ENCODE measurements at regions of chr7 and their contacts with region 1.

Region 1: DNA sequence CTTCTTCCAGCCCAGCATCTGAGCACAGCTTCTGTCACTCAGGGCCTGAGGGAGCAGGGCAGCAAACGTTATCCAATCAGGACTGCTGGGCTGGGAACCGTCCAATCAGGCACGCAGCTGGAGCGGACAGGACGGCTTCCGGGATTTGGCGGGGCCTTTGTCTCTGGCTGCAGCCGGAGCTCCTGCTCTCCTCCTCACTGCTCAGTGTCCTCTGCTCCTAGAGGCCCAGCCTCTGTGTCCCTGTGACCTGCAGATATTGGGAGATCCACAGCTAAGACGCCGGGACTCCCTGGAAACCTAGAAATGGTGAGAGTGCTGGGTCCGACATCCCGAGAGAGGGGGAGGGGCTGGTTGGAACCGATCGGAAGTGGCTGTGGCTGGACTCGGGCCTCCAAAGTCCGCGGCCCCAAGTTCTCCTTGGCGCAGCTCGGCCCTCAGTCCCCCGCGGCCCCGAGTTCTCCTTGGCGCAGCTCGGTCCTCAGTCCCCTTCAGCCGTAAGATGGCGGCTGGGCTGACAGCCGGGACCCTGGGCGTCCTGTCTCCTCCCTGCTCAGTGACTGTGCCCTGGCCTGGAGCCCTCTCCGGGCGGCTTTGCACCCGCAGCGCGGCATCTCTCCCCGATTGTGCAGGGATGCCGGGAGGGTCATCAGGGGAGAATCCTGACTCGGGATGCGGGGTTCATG is at the start of gene ZNF107:
- DNase-seq: peak; percentile 93
- H3K4me3 Mint-ChIP-seq: peak within 1 kb of the TSS; percentile 95
- H3K27ac Mint-ChIP-seq: peak within 1 kb of the TSS; percentile 96
- H3K4me1 Mint-ChIP-seq: peaks cover 47% of the 10 kb centered on the region
- H3K27me3 Mint-ChIP-seq: no peaks in the 10 kb centered on the region
- total RNA-seq, gene ZNF107: 7.7 to 8.0 TPM

Region 2: GRCh38 chr7:63900394-63901203 is 765.5 kb before region 1 on chr7:
- CTCF ChIA-PET with region 1: no interaction called
- intact Hi-C with region 1: loop called (anchors 2 kb)
- DNase-seq: peak; percentile 95
- H3K4me3 Mint-ChIP-seq: peak overlapping the region; percentile 93
- H3K27ac Mint-ChIP-seq: peak overlapping the region; percentile 77
- H3K4me1 Mint-ChIP-seq: peaks cover 8% of the 10 kb centered on the region
- H3K27me3 Mint-ChIP-seq: no peaks in the 10 kb centered on the region

Region 3: DNA sequence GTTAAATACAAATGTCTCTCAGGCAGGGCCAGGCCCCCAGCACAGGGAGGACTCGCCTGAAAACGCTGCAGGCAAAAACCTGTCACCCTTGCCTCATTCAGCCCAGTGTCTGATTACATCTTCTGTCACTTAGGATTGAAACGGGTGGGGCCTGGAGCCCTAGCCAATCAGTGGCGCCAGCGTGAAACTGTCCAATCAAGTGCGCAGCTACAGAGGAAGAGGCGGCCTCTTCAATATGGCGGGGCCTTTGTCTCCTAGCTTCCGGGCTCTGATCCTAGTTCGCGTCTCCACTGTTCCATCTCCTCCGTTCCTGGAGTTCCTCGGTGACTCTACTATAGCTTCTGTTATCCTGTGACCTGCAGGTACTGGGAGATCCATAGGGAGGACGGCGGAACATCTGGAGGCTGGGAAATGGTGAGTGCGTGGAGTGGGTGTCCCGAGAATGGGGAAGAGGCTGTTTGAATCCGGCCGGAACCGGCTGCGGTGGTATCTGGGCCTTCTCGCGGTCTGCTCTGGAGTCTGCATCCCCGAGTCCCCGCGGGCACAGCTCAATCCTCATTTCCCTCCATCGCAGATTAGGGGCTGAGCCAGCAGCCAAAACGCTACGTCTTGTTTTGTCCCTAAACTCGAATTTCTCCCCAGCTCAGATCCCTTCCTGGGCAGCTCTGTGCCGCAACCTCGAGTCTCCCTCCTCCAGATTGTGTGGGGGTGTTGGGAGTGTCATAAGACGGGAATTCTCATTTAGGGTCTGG is 352.2 kb before region 1 on chr7 and contains the start of gene ZNF736:
- CTCF ChIA-PET with region 1: no interaction called
- intact Hi-C with region 1: loop called (anchors 2 kb)
- DNase-seq: peak; percentile 94
- H3K4me3 Mint-ChIP-seq: peak within 1 kb of the TSS; percentile 99
- H3K27ac Mint-ChIP-seq: peak within 1 kb of the TSS; percentile 97
- H3K4me1 Mint-ChIP-seq: peaks cover 35% of the 10 kb centered on the region
- H3K27me3 Mint-ChIP-seq: no peaks in the 10 kb centered on the region
- total RNA-seq, gene ZNF736: 22.7 to 24.0 TPM

Region 4: GRCh38 chr7:64685091-64685490 is 19.0 kb after region 1 on chr7:
- CTCF ChIA-PET with region 1: no interaction called
- intact Hi-C with region 1: no loop called
- DNase-seq: no peak
- H3K4me3 Mint-ChIP-seq: no peak overlapping the region
- H3K27ac Mint-ChIP-seq: no peak overlapping the region
- H3K4me1 Mint-ChIP-seq: peaks cover 34% of the 10 kb centered on the region
- H3K27me3 Mint-ChIP-seq: no peaks in the 10 kb centered on the region

Region 5: DNA sequence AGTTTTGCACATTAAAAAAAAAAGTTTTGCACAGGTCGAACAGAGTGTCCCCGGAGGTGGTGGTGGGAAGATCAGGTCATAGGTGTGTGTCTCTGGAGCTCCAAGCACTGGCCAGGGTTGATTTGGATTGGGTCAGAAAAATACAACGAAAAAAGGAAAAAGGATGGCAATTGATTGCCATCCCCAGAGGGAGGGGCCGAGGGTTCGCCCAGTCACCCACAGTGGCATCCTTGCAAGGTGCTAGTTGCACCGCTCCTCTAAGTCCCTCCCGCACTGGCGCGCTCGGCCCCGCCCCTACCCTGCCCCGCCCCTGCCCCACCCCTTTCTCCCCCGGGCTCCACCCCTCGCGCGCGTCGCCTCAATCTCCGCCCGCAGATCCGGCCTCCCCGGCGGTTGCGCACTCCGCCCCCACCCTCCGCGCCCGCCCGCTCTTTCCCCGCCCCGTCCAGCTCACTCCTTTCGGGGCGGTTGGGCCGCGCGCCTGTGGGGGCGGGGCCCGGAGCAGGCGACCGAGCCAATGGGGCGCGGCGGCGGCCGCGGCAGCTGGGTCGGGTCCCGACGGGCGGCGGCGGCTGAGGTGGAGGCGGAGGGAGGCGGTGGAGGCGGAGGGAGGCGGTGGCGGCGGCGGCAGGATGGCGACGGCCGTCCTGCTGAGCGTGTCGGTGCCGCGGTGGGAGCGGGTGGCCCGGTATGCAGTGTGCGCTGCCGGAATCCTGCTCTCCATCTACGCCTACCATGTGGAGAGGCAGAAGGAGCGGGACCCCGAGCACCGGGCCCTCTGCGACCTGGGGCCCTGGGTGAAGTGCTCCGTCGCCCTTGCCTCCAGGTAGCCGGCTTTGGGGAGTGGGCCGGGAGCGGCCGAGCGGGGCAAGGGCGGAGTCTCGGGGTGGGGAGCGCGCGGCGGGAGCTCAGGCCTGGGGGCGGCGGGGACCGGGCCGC is 371.9 kb after region 1 on chr7:
- CTCF ChIA-PET with region 1: no interaction called
- intact Hi-C with region 1: loop called (anchors 1 kb)
- DNase-seq: peak; percentile 93
- H3K4me3 Mint-ChIP-seq: peak overlapping the region; percentile 73
- H3K27ac Mint-ChIP-seq: no peak overlapping the region
- H3K4me1 Mint-ChIP-seq: peaks cover 11% of the 10 kb centered on the region
- H3K27me3 Mint-ChIP-seq: no peaks in the 10 kb centered on the region

Region 6: GRCh38 chr7:65422670-65423069 is 756.5 kb after region 1 on chr7:
- CTCF ChIA-PET with region 1: no interaction called
- intact Hi-C with region 1: no loop called
- DNase-seq: no peak
- H3K4me3 Mint-ChIP-seq: no peak overlapping the region
- H3K27ac Mint-ChIP-seq: no peak overlapping the region
- H3K4me1 Mint-ChIP-seq: no peaks in the 10 kb centered on the region
- H3K27me3 Mint-ChIP-seq: no peaks in the 10 kb centered on the region